ENCODE measurements at regions of chr15 and their contacts with region 1.

Region 1: DNA sequence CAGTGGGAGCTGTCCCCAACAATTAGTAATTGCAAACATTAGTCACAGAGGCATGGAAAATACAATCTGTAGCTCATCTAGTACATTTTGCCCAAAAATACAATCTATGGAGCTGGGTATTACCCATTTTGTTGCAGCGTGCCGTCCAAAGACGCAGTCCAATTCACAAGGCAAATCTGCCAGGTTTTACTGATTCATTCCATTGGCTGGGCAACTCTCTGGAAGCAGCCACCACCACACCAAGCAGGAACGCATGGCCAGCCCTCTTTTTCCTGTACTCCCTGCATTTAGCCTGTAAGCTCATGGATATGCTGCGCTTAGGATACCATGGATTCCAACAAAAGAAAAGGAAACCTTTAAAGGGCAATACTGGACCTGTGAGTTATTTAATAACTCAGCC is 60.5 kb upstream of the ARRDC4 start:
- DNase-seq: no peak
- ATAC-seq: no peak
- H3K4me3 ChIP-seq: no peak overlapping the region
- H3K4me3 Mint-ChIP-seq: no peak overlapping the region
- H3K27ac ChIP-seq: no peak overlapping the region
- H3K27ac Mint-ChIP-seq: no peak overlapping the region
- H3K4me1 ChIP-seq: no peaks in the 10 kb centered on the region
- H3K4me1 Mint-ChIP-seq: peaks cover 0 to 5% (median 0%) of the 10 kb centered on the region in 3 donors
- H3K27me3 ChIP-seq: peaks cover 0 to 3% of the 10 kb centered on the region in 2 experiments
- H3K27me3 Mint-ChIP-seq: peaks cover 22 to 35% of the 10 kb centered on the region in 2 donors

Region 2: GRCh38 chr15:98103570-98103969 is 203.6 kb after region 1 on chr15:
- CTCF ChIA-PET with region 1: interaction called in 1 of 2 experiments, 10 read pairs
- POLR2A ChIA-PET with region 1: no interaction called
- DNase-seq: no peak
- ATAC-seq: no peak
- H3K4me3 ChIP-seq: no peak overlapping the region
- H3K4me3 Mint-ChIP-seq: no peak overlapping the region
- H3K27ac ChIP-seq: no peak overlapping the region
- H3K27ac Mint-ChIP-seq: no peak overlapping the region
- H3K4me1 ChIP-seq: no peaks in the 10 kb centered on the region
- H3K4me1 Mint-ChIP-seq: no peaks in the 10 kb centered on the region
- H3K27me3 ChIP-seq: peaks cover 0 to under 1% of the 10 kb centered on the region in 2 experiments
- H3K27me3 Mint-ChIP-seq: peaks cover 0 to 2% of the 10 kb centered on the region in 2 donors

Measured in T-cell (primary cell).